ENCODE measurements at regions of chr13 and their contacts with region 1.

Region 1: GRCh38 chr13:98576963-98577822 is at the start of gene STK24:
- DNase-seq: peak in 1 of 2 donors; percentile 45
- H3K4me3 ChIP-seq: peak within 1 kb of the TSS; percentile 95 to 99 (median 98)
- H3K27ac ChIP-seq: peak within 1 kb of the TSS; percentile 97 to 100
- H3K4me1 ChIP-seq: peaks cover 0 to 6% of the 10 kb centered on the region in 2 donors
- H3K27me3 ChIP-seq: no peaks in the 10 kb centered on the region
- CTCF ChIP-seq: no peak
- POLR2A ChIP-seq: no peak
- total RNA-seq, gene STK24: 61.3 to 149 (median 71.9) TPM

Region 2: GRCh38 chr13:98509271-98510155 is 67.7 kb before region 1 on chr13:
- intact Hi-C with region 1: loop called (anchors 10 kb)
- DNase-seq: no peak
- H3K4me3 ChIP-seq: no peak overlapping the region
- H3K27ac ChIP-seq: peak overlapping the region; percentile 12 to 73
- H3K4me1 ChIP-seq: peaks cover 3 to 38% of the 10 kb centered on the region in 2 donors
- H3K27me3 ChIP-seq: no peaks in the 10 kb centered on the region
- CTCF ChIP-seq: no peak
- POLR2A ChIP-seq: no peak

Measured in breast epithelium (tissue), 4 donors.